ENCODE measurements at regions of chr12 and their contacts with region 1.

Region 1: DNA sequence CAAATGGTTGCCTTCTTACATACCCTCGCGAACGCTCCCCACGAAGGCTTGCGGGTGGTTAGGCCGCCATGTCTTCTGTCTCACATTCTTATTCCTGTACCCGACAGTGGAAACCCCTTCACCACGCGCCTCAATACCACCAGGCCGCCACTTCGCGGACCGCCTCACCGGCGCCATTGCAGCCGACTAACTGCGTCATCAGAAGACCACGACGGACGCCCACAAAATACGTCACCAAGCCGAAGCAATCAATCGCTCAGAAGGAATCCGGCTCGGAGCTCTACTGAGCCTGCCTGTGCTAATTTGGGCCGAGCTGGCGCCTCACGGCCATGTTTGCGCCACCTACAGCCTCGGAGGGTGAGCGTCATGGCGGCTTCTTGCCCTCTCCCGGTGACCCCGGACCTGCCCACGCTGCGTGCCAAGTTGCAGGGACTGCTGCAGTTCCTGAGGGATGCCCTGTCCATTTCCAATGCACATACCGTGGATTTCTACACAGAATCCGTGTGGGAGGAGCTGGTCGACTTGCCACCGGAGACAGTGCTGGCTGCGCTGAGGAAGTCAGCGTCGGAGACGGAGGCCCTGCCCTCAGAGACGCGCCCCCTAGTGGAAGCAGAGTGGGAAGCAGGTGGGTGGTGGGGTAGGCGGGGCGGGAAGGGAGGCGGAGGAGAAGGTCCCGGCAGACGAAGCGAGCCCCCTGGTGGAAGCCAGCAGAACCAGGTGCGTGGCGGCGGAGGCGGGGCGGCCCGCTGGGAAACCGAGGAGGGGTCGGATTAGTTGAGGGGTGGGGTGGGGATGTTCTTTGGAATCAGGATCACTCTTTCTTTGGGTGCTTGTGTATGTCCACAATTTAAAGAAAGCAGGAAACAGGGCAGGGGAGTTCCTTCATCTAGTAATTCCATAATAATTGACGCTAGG is at the starts of genes CCDC59 and METTL25:
- DNase-seq: peak; percentile 94 to 99
- ATAC-seq: peak; percentile 88 to 97 (median 89)
- H3K4me3 ChIP-seq: peak within 1 kb of the TSS; percentile 95
- H3K4me3 Mint-ChIP-seq: peak within 1 kb of the TSS; percentile 96
- H3K27ac ChIP-seq: peak within 1 kb of the TSS; percentile 96
- H3K27ac Mint-ChIP-seq: peak within 1 kb of the TSS; percentile 100
- H3K4me1 ChIP-seq: peaks cover 6% of the 10 kb centered on the region
- H3K4me1 Mint-ChIP-seq: peaks cover 53 to 58% of the 10 kb centered on the region in 2 donors
- H3K27me3 ChIP-seq: no peaks in the 10 kb centered on the region
- H3K27me3 Mint-ChIP-seq: no peaks in the 10 kb centered on the region
- CTCF ChIP-seq: peak; percentile 99
- total RNA-seq, gene CCDC59: 104 to 124 (median 105) TPM
- total RNA-seq, gene METTL25: 15.4 to 21.2 (median 17.8) TPM

Region 2: DNA sequence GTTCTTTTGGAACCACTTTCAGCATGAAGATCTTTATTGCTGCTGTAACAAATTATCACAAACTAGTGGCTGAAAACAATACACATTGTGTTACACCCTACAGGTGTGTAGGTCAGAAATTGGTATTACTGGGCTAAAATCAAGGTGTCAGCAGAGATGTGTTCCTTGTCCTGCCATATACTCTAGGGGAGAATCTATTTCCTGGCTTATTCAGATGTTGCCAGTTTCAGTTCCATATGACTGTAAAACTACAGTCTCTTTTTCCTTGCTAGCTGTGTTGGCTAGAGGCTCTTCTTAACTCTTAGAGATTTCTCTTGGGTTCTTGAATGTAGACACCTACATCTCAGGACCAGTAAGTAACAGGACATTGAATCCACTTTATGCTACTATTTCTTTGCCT is 383.7 kb before region 1 on chr12:
- intact Hi-C with region 1: no loop called
- DNase-seq: no peak
- ATAC-seq: no peak
- H3K4me3 ChIP-seq: no peak overlapping the region
- H3K4me3 Mint-ChIP-seq: no peak overlapping the region
- H3K27ac ChIP-seq: no peak overlapping the region
- H3K27ac Mint-ChIP-seq: no peak overlapping the region
- H3K4me1 ChIP-seq: no peaks in the 10 kb centered on the region
- H3K4me1 Mint-ChIP-seq: no peaks in the 10 kb centered on the region
- H3K27me3 ChIP-seq: no peaks in the 10 kb centered on the region
- H3K27me3 Mint-ChIP-seq: peaks cover 2 to 3% of the 10 kb centered on the region in 2 donors
- CTCF ChIP-seq: no peak

Region 3: GRCh38 chr12:82685790-82686167 is 327.3 kb after region 1 on chr12:
- intact Hi-C with region 1: loop called (anchors 10 kb)
- DNase-seq: peak; percentile 75 to 93
- ATAC-seq: peak; percentile 57 to 78 (median 62)
- H3K4me3 ChIP-seq: peak overlapping the region; percentile 71
- H3K4me3 Mint-ChIP-seq: peak overlapping the region; percentile 96
- H3K27ac ChIP-seq: peak overlapping the region; percentile 88
- H3K27ac Mint-ChIP-seq: peak overlapping the region; percentile 94 to 95
- H3K4me1 ChIP-seq: peaks cover 15% of the 10 kb centered on the region
- H3K4me1 Mint-ChIP-seq: peaks cover 26 to 33% of the 10 kb centered on the region in 2 donors
- H3K27me3 ChIP-seq: no peaks in the 10 kb centered on the region
- H3K27me3 Mint-ChIP-seq: peaks cover 6 to 15% of the 10 kb centered on the region in 2 donors
- CTCF ChIP-seq: peak; percentile 73

Measured in natural killer cell (primary cell).